MCF 10A (cell line): ENCODE measurements at regions of chr1 and their contacts with region 1.

Region 1: DNA sequence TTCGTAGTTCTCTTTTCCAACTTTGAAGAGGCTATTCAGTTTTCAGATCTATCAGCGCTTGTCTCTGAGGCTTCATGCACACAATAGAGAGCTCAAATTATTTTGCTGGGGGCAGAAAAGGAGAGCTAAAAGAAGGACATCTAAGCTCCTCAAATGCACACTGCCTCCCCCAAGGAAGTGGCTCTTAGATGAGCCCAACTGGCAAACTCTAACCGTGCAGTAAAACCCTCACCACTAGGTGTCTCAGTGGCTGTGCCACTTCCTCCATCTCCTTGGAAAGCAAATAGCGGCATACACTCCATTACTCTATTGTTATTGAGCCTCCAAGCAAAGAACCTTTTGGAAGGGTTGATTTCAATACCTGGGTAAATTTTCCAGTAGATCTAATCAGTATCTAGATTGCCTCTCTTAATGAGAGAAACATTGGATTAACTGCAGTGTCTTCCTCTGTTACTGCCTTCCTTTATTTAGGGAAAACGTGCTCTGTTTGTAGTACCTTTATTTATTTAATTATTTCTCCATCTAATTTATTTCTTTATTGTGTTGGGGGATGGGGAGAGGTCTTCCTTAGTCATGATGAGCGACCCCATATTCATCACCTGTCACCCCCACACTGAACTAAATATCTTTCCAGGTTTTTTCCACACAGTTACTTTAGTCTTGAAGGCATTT is 9.2 kb upstream of the SFPQ start:
- DNase-seq: peak; percentile 84
- H3K4me3 Mint-ChIP-seq: no peak overlapping the region
- H3K27ac Mint-ChIP-seq: no peak overlapping the region
- H3K4me1 Mint-ChIP-seq: no peaks in the 10 kb centered on the region
- H3K27me3 Mint-ChIP-seq: no peaks in the 10 kb centered on the region
- CTCF ChIP-seq: peak; percentile 86

Region 2: DNA sequence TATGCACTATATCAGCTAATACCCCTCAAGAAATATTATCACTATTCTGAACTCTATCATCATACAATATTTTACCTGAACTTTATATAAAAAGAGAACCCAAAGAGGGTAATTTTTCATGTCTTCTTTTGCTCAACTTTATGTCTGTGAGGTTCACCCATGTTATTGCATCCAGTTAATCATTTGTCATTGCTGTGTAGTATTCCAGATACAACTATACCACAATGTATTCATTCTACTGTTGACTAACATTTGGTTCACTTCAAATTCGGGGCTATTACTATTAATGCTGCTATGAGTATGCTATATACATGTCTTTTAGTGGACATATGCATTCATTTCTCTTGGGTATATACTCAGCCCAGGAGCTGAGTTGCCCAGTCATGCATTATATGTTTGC is 251.8 kb before region 1 on chr1:
- CTCF ChIA-PET with region 1: no interaction called
- POLR2A ChIA-PET with region 1: no interaction called
- intact Hi-C with region 1: no loop called
- DNase-seq: no peak
- H3K4me3 Mint-ChIP-seq: no peak overlapping the region
- H3K27ac Mint-ChIP-seq: no peak overlapping the region
- H3K4me1 Mint-ChIP-seq: no peaks in the 10 kb centered on the region
- H3K27me3 Mint-ChIP-seq: peaks cover 32% of the 10 kb centered on the region
- CTCF ChIP-seq: no peak

Region 3: DNA sequence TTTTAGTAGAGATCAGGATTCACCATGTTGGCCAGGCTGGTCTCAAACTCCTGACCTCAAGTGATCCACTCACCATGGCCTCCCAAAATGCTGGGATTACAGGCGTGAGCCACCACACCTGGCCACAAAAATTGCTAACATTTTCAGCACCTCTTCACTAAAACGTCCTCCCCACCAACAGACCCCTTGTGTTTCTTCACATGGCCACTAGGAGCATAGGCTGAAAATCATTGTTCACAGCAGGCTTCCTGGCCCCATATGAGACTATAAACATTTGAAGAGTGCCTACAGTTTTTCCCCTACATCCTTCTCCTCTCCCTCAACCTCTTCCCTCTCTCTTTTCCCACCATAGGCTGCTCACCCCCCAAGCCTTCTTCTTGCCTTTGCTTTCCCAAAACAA is 18.8 kb after region 1 on chr1:
- CTCF ChIA-PET with region 1: interaction called, 10 read pairs
- POLR2A ChIA-PET with region 1: no interaction called
- intact Hi-C with region 1: no loop called
- DNase-seq: peak; percentile 34
- H3K4me3 Mint-ChIP-seq: no peak overlapping the region
- H3K27ac Mint-ChIP-seq: no peak overlapping the region
- H3K4me1 Mint-ChIP-seq: peaks cover 6% of the 10 kb centered on the region
- H3K27me3 Mint-ChIP-seq: no peaks in the 10 kb centered on the region
- CTCF ChIP-seq: peak; percentile 22

Region 4: DNA sequence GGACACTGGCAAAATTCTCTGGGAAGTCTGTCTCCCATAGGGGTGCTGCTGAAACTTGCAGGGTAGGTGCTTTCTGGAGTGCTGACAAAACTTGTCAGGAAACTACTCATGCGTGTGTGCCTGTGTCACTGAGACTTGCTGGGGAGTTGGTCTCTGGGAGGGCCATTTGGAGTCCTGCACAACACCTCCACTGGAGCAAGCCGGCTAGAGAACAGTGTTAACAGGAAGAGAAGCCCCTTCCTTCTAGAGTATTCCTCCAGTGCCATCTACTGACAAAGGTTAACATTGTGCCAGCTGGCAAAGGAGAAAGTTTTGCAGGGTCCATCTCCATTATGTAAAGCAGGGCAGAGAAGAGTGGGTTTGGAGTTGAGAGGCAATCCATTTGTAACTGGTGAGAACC is 96.3 kb after region 1 on chr1:
- CTCF ChIA-PET with region 1: interaction called, 12 read pairs
- POLR2A ChIA-PET with region 1: interaction called, 4 read pairs
- intact Hi-C with region 1: loop called (anchors 1 kb)
- DNase-seq: peak; percentile 39
- H3K4me3 Mint-ChIP-seq: no peak overlapping the region
- H3K27ac Mint-ChIP-seq: peak overlapping the region; percentile 47
- H3K4me1 Mint-ChIP-seq: peaks cover 10% of the 10 kb centered on the region
- H3K27me3 Mint-ChIP-seq: no peaks in the 10 kb centered on the region
- CTCF ChIP-seq: peak; percentile 23